Right cardiac atrium (tissue), 5 donors: ENCODE measurements at regions of chr9 and their contacts with region 1.

Region 1: DNA sequence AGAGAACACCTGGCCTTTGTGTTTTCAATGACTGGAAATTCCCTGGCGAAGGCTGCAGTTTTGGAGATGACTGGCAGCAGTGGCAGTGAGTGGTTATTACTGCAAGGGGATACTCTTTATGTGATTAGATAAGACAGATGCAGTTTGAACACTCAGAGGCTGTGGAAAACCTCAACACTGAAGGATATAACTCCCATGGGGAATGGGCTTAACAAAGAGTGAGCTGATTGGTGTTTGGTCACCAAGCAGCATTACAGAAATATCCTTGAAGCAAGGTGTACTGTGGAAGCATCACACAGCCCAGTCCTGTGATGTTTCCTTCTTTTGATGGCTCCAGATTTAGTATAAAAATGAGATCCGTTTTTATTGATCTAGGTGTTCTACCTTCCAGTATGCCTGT is 490.7 kb upstream of the PTPRD start:
- DNase-seq: no peak
- ATAC-seq: no peak
- H3K4me3 ChIP-seq: no peak overlapping the region
- H3K27ac ChIP-seq: no peak overlapping the region
- H3K4me1 ChIP-seq: no peaks in the 10 kb centered on the region
- H3K27me3 ChIP-seq: no peaks in the 10 kb centered on the region

Region 2: DNA sequence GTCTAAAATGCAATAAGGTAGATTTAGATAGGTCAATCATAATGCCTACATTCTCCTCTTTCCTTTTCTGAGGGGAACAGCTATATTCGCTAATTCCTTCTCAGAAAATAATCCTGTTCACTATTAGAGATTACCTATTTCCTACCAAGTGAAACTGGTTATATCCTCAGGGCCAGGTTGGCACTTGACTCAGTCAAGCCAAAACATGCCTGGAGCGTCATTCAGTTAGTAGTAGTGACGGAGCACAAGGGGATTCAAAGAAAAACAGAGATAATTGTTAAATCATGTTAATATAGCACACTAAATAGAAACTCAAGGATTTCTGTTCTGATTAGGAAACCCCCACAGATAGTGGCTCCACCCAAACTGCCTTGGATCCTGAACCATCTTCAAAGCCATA is 24.6 kb after region 1 on chr9:
- intact Hi-C with region 1: loop called in 1 of 4 experiments (anchors 2 kb)
- DNase-seq: no peak
- ATAC-seq: no peak
- H3K4me3 ChIP-seq: no peak overlapping the region
- H3K27ac ChIP-seq: no peak overlapping the region
- H3K4me1 ChIP-seq: no peaks in the 10 kb centered on the region
- H3K27me3 ChIP-seq: no peaks in the 10 kb centered on the region